H1 (cell line): ENCODE measurements at regions of chr5 and their contacts with region 1.

Region 1: GRCh38 chr5:140785905-140786686 is at the start of gene PCDHA1:
- DNase-seq: no peak
- H3K4me3 ChIP-seq: no peak within 1 kb of the TSS
- H3K27ac ChIP-seq: no peak within 1 kb of the TSS
- H3K4me1 ChIP-seq: no peaks in the 10 kb centered on the region
- H3K27me3 ChIP-seq: no peaks in the 10 kb centered on the region
- CTCF ChIP-seq: peak in 2 of 3 experiments; percentile 35 to 37; a peak in 2 of 4 replicates
- EP300 ChIP-seq: no peak
- POLR2A ChIP-seq: no peak
- RAD21 ChIP-seq: peak; percentile 47 to 59
- total RNA-seq, gene PCDHA1: 0.50 and 0.52 TPM in 2 replicates

Region 2: GRCh38 chr5:140647042-140647341 is 139.1 kb before region 1 on chr5:
- CTCF ChIA-PET with region 1: no interaction called
- POLR2A ChIA-PET with region 1: no interaction called
- DNase-seq: no peak
- H3K4me3 ChIP-seq: peak overlapping the region; percentile 63 to 86 (median 78)
- H3K27ac ChIP-seq: peak overlapping the region; percentile 26; the same call in 1 of the 2 replicates
- H3K4me1 ChIP-seq: peaks cover 0 to 4% (median 0%) of the 10 kb centered on the region in 4 experiments; a peak in 2 of 7 replicates
- H3K27me3 ChIP-seq: no peaks in the 10 kb centered on the region
- CTCF ChIP-seq: no peak
- EP300 ChIP-seq: no peak
- POLR2A ChIP-seq: no peak
- RAD21 ChIP-seq: no peak

Region 3: GRCh38 chr5:140753561-140753960 is 32.5 kb before region 1 on chr5:
- CTCF ChIA-PET with region 1: interaction called, 12 read pairs
- POLR2A ChIA-PET with region 1: no interaction called
- DNase-seq: no peak
- H3K4me3 ChIP-seq: no peak overlapping the region
- H3K27ac ChIP-seq: no peak overlapping the region
- H3K4me1 ChIP-seq: no peaks in the 10 kb centered on the region
- H3K27me3 ChIP-seq: no peaks in the 10 kb centered on the region
- CTCF ChIP-seq: no peak
- EP300 ChIP-seq: no peak
- POLR2A ChIP-seq: no peak
- RAD21 ChIP-seq: no peak

Region 4: GRCh38 chr5:141564216-141564692 is 778.2 kb after region 1 on chr5:
- CTCF ChIA-PET with region 1: no interaction called
- POLR2A ChIA-PET with region 1: no interaction called
- DNase-seq: peak; percentile 56 to 62
- H3K4me3 ChIP-seq: no peak overlapping the region
- H3K27ac ChIP-seq: peak overlapping the region; percentile 26; the same call in 1 of the 2 replicates
- H3K4me1 ChIP-seq: peaks cover 0 to 7% (median 3%) of the 10 kb centered on the region in 4 experiments; a peak in 4 of 7 replicates
- H3K27me3 ChIP-seq: no peaks in the 10 kb centered on the region
- CTCF ChIP-seq: peak in 2 of 3 experiments; percentile 96; a peak in 3 of 4 replicates
- EP300 ChIP-seq: peak in 1 of 2 experiments; percentile 89; a peak in 2 of 3 replicates
- POLR2A ChIP-seq: no peak
- RAD21 ChIP-seq: peak; percentile 55 to 65